ENCODE measurements at regions of chr9 and their contacts with region 1.

Region 1: DNA sequence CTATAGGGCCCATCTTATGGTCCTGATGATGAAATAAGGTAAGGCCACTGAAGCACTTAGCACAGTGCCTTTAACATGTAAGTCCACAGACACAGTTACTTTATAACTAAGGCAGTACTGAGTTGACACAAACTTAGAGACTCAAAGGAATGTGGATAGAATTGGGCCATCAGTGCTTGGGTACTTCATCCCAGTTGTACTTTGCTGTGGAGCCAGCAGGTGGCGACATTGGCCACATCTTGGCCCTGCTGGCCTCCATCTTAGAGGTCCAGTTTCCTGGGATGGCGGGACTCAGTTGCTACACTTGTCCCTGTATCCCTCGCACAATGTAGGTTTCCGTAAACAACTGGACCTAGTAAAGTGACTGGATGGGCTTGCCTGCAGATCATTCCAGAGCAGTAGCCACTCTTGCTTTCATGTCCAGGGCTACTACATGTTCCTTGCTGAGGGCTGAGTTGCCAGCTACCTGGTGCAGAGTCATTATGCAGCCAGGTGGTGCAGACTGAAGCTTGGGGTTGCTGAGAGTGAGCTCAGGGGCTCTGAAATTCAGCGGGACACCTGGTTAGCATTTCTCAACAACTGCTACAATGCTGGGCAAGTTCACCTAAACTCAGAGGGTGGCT is 10.6 kb downstream of the MTAP start:
- DNase-seq: no peak
- H3K4me3 ChIP-seq: no peak overlapping the region
- H3K27ac ChIP-seq: no peak overlapping the region
- H3K27me3 ChIP-seq: no peaks in the 10 kb centered on the region
- CTCF ChIP-seq: peak; percentile 87

Region 2: GRCh38 chr9:21708260-21708711 is 104.8 kb before region 1 on chr9:
- CTCF ChIA-PET with region 1: no interaction called
- POLR2A ChIA-PET with region 1: no interaction called
- DNase-seq: no peak
- H3K4me3 ChIP-seq: no peak overlapping the region
- H3K27ac ChIP-seq: no peak overlapping the region
- H3K27me3 ChIP-seq: no peaks in the 10 kb centered on the region
- CTCF ChIP-seq: no peak

Region 3: DNA sequence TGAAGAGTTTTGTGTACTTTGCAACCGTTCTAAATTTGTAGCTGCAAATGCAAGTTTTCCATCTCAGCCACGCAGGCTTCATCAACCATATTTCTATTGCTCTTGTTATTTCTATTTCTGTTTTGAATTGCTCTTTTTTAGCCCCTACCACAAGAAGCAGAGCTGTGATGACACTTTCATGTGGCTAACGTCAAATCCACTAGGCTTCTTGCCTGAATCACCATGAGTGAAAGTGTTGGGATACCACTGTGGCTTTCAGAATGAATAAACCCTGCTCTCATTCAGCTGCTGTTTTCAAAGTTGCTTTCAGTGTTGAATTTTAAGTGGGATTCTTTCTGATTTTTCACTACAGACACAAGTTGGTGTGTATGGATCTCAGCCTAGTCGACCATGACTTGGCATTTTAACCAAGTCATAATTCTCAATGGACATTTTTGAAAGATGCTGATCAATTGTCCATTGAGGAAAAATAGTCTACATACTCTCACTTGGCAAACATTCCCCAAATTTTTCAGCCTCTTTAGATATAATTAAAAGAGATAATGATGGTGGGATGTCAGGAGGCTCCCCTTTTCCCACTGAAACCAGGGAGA is 51.7 kb before region 1 on chr9:
- CTCF ChIA-PET with region 1: no interaction called
- POLR2A ChIA-PET with region 1: no interaction called
- DNase-seq: no peak
- H3K4me3 ChIP-seq: no peak overlapping the region
- H3K27ac ChIP-seq: no peak overlapping the region
- H3K27me3 ChIP-seq: no peaks in the 10 kb centered on the region
- CTCF ChIP-seq: no peak

Region 4: DNA sequence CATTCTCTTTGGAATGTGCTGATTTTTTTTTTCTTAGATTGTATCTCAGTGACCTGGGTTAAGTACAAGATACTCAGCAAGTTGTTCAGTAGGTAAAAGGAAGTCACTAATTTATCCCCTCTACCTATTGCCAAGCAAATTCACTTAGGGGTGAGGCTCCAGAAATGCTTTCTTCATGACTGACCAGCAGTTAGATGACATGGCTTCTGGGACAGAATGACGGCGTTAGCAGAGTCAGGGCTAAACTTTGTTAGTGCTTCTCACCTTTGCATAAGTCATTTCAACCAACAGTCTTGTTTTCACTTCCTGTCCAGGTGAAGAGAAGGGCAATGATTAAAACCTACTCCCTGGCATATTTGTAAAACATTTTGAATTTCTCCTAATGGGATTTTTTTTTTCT is 30.9 kb before region 1 on chr9:
- CTCF ChIA-PET with region 1: no interaction called
- POLR2A ChIA-PET with region 1: no interaction called
- DNase-seq: no peak
- H3K4me3 ChIP-seq: no peak overlapping the region
- H3K27ac ChIP-seq: no peak overlapping the region
- H3K27me3 ChIP-seq: no peaks in the 10 kb centered on the region
- CTCF ChIP-seq: no peak

Region 5: GRCh38 chr9:21802195-21803000 is 10.7 kb before region 1 on chr9 and contains the start of gene MTAP:
- CTCF ChIA-PET with region 1: interaction called, 13 read pairs
- POLR2A ChIA-PET with region 1: no interaction called
- DNase-seq: peak; percentile 87
- H3K4me3 ChIP-seq: peak within 1 kb of the TSS; percentile 86
- H3K27ac ChIP-seq: peak within 1 kb of the TSS; percentile 84
- H3K27me3 ChIP-seq: no peaks in the 10 kb centered on the region
- CTCF ChIP-seq: no peak
- polyA plus RNA-seq, gene MTAP: 21.7 and 26.1 TPM in 2 replicates

Region 6: GRCh38 chr9:21852754-21853153 is 39.7 kb after region 1 on chr9:
- CTCF ChIA-PET with region 1: interaction called, 10 read pairs
- POLR2A ChIA-PET with region 1: no interaction called
- DNase-seq: no peak
- H3K4me3 ChIP-seq: no peak overlapping the region
- H3K27ac ChIP-seq: no peak overlapping the region
- H3K27me3 ChIP-seq: no peaks in the 10 kb centered on the region
- CTCF ChIP-seq: no peak

Region 7: GRCh38 chr9:21974548-21975409 is 161.7 kb after region 1 on chr9:
- CTCF ChIA-PET with region 1: interaction called, 11 read pairs
- POLR2A ChIA-PET with region 1: no interaction called
- DNase-seq: no peak
- H3K4me3 ChIP-seq: peak overlapping the region; percentile 67
- H3K27ac ChIP-seq: no peak overlapping the region
- H3K27me3 ChIP-seq: peaks cover 67% of the 10 kb centered on the region
- CTCF ChIP-seq: no peak

Region 8: GRCh38 chr9:22037954-22038690 is 225.1 kb after region 1 on chr9:
- CTCF ChIA-PET with region 1: interaction called, 32 read pairs
- POLR2A ChIA-PET with region 1: no interaction called
- DNase-seq: no peak
- H3K4me3 ChIP-seq: no peak overlapping the region
- H3K27ac ChIP-seq: no peak overlapping the region
- H3K27me3 ChIP-seq: no peaks in the 10 kb centered on the region
- CTCF ChIP-seq: peak; percentile 61

Region 9: GRCh38 chr9:22119537-22120158 is 306.6 kb after region 1 on chr9:
- CTCF ChIA-PET with region 1: interaction called, 19 read pairs
- POLR2A ChIA-PET with region 1: no interaction called
- DNase-seq: no peak
- H3K4me3 ChIP-seq: no peak overlapping the region
- H3K27ac ChIP-seq: no peak overlapping the region
- H3K27me3 ChIP-seq: no peaks in the 10 kb centered on the region
- CTCF ChIP-seq: peak; percentile 59

Region 10: DNA sequence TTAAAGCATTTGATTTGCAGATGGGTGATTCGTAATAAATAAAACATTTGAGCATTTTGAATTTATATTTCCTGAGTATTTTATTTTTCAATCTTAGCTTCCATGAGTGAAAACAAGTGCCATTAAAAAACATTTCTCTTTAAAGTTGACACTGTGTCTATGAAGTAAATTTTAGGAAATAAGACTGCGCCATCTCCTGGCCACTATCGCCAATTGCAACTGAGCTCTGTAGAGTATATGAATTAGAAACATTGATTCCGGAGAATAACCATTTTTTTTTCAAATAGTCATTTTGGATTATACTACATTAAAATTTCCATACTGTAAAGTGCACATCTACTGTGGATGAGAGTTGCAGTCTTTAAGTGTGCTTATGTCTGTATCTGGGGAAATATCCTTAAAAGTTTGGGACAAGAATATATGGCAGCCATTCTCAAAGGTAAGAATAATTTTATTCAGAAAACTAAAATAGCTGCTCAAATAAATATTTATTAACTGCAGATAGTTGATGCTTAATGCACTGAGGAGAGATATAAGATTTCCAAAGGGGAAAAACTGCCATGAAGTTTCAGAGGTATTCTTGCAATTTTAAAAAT is 639.5 kb after region 1 on chr9:
- CTCF ChIA-PET with region 1: interaction called, 31 read pairs
- POLR2A ChIA-PET with region 1: no interaction called
- DNase-seq: no peak
- H3K4me3 ChIP-seq: no peak overlapping the region
- H3K27ac ChIP-seq: no peak overlapping the region
- H3K27me3 ChIP-seq: no peaks in the 10 kb centered on the region
- CTCF ChIP-seq: peak; percentile 73

Measured in AG04450 (cell line).